Posterior cingulate gyrus (tissue), 11 donors: ENCODE measurements at regions of chr16 and their contacts with region 1.

Region 1: DNA sequence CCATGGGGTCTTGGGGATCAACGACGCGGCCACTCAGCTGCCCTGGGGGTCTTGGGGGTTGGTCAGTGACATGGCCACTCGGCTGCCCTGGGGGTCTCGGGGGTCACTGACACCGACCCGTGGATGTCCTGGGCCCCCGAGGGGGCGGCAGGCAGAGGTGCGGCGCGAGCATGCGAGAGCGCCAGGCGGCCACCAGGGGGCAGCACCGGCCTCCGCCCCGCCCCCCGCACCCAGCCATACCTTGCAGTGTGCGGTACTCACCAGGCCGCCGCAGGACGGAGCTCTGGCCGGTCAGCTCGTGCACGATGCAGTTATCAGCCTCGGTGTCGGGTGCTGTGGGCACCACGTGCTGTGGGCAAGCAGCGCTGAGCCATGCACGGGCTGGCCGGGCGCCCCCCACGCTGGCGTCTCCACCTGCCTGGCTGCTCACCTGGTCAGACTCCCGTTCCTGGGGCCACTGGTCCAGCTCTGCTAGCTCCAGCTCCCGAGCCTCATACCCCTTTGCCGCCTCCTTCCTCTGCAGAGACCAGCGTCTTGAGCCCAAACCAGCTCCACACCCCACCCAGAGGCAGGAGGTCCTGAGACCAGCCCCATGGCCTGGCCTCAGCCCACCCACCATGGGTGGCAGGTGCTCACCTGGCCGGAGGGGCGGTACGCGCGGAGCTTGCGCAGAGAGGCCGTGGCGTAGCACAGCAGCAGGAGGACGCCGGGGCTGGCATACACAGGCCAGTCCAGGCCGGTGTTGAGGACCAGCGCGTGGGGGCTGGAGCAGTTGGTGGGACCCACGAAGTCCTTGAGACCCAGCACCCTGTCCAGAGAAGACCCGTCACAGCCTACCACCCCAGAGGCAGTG is 31.2 kb downstream of the CTU2 start:
- DNase-seq: peak in 9 of 10 donors; percentile 50 to 95 (median 78)

Region 2: DNA sequence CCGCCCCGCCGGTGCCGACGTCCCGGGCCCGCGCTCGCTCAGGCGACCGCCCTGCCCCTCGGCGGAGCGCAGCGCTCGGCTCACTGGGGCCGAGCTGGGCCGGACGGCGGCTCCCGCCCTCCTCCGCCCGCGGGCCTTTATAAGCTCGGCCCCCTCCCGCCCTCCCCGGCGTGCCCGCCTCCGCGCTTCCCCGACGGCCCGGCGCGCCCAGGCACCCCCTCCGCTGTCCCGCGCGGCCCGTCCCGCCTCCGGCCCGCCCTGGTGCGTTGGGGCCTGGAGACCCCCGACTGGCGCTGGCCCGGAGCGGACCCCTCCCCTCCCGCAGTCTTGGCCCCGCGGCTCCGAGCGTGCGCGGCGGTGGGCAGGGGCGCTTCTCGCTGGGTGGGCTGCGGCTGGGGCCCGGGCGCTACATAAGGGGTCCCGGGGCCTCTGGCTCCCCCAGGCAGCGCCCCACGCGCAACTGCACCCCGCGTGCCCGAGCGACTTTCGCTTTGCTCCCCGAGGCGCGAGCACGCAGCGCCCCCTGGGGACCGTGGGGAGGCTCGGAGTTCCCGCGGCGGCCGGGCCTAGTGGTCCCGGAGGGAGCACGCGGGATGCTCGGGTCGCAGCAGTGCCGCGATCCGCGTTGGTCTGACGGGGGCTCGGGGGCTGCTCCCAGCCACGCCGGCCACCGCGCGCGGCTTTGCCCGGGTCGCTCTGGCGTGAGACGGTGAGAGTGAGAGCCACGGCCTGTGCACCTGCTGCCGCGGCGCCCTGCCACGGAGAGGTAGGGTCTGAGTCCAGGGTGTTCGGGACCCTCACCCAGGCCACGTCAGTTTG is 47.8 kb after region 1 on chr16 and contains the start of gene PIEZO1:
- intact Hi-C with region 1: loop called (anchors 1 kb)
- DNase-seq: peak in 8 of 10 donors; percentile 53 to 94 (median 66)

Region 3: GRCh38 chr16:89343501-89344457 is 606.3 kb after region 1 on chr16:
- intact Hi-C with region 1: no loop called
- DNase-seq: peak in 2 of 10 donors; percentile 81 to 84